ENCODE measurements at regions of chrX and their contacts with region 1.

Region 1: DNA sequence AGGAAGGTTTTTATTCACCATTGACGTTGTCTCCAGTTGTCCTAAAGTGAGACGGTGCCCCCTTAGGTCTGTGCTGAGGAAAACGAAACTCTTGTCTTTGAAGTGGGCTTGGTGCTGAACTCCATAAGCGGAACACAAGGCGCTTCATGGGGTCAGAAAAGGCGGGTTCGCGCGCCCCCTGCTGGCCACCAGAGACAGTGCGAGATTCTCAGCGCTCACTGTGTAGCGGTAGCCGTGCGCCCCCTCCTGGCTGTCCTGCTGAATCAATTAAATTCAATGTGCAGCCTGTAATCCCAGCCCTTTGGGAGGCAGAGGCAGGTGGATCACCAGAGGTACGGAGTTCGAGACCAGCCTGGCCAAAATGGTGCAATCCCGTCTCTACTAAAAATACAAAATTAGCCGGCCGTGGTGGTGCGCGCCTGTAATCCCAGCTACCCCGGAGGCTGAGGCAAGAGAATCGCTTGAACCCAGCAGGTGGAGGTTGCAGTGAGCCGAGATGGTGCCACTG is 64.1 kb downstream of the RLIM start:
- DNase-seq: peak; percentile 68
- H3K4me3 Mint-ChIP-seq: peak overlapping the region; percentile 39
- H3K27ac Mint-ChIP-seq: no peak overlapping the region
- H3K4me1 Mint-ChIP-seq: peaks cover 6% of the 10 kb centered on the region
- H3K27me3 Mint-ChIP-seq: no peaks in the 10 kb centered on the region

Region 2: GRCh38 chrX:73855546-73855945 is 694.8 kb before region 1 on chrX:
- intact Hi-C with region 1: loop called (anchors 5 kb)
- DNase-seq: peak; percentile 18
- H3K4me3 Mint-ChIP-seq: no peak overlapping the region
- H3K27ac Mint-ChIP-seq: no peak overlapping the region
- H3K4me1 Mint-ChIP-seq: no peaks in the 10 kb centered on the region
- H3K27me3 Mint-ChIP-seq: no peaks in the 10 kb centered on the region

Region 3: DNA sequence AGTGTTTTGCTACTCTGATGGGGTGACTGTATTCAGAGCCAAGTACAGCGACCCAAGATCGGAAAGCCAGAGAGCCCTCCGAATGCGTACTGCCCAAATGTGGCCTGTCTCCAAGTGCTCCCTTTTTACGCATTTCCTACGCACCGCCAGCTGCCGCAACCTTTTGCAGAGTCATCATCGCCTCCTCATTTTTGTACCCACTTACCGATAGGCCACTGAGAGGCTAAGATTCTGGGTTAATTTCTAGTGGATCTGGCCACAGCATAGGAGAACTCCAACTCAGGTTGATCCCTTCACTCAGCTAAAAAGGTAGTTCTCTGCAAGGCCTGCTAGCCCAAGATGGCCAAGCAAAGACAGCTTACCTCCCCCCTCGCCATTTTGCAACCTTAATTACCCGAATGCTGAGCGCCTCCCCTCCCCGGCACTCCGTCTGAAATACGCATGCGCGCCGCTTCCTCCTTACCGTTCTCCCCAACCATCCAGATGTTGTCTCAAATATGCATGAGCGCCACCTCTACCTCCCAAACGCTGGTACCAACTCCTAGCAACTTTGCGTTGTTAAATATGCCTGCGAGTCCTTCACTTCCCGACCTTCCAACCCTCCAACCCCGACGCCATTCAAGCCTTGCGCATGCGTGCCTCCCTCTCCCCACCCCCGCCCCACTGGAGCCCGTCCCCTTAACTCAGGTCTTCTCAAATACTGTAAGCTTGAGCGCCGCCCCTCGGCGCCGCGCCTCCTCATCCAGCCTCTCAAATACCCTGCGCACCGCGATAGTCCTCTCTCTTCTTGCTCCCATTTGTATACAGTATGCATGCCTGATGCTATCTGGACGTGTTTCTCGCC is 258.2 kb before region 1 on chrX:
- intact Hi-C with region 1: loop called (anchors 5 kb)
- DNase-seq: peak; percentile 68
- H3K4me3 Mint-ChIP-seq: peak overlapping the region; percentile 97
- H3K27ac Mint-ChIP-seq: peak overlapping the region; percentile 100
- H3K4me1 Mint-ChIP-seq: peaks cover 14% of the 10 kb centered on the region
- H3K27me3 Mint-ChIP-seq: no peaks in the 10 kb centered on the region

Region 4: DNA sequence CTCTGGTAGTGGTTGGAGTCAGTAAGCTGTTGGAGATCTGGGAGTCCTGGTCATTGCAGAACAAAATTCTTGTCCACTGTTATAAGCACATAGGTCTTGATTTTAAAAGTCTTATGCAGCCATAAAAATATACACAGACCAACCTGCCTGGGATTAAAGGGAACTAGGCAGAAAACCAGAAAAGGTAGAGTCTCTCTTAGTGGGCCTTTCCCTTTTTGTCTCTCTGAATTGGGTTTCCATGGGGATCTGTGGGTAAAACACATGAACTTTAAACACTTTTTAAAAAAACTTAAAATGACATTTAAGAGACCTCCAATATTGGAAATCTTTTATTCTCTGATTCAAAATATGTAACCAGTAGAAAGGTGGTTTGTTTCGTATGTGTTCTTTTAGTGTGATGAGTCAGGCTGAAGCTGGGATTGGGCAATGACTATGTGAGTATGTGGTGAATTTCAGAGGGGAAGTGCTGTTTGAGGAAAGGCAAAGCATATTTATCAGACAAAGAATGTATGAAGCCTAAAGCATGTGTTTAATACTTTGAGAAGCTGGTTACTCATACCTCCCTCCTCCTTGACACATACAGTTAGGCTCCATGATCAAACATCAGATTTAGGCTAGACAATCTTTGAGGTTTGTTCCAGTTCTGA is 99.4 kb before region 1 on chrX:
- intact Hi-C with region 1: loop called (anchors 2 kb)
- DNase-seq: no peak
- H3K4me3 Mint-ChIP-seq: no peak overlapping the region
- H3K27ac Mint-ChIP-seq: peak overlapping the region; percentile 80
- H3K4me1 Mint-ChIP-seq: peaks cover 18% of the 10 kb centered on the region
- H3K27me3 Mint-ChIP-seq: no peaks in the 10 kb centered on the region

Region 5: GRCh38 chrX:74579597-74580198 is 29.3 kb after region 1 on chrX:
- intact Hi-C with region 1: loop called (anchors 2 kb)
- DNase-seq: no peak
- H3K4me3 Mint-ChIP-seq: no peak overlapping the region
- H3K27ac Mint-ChIP-seq: peak overlapping the region; percentile 75
- H3K4me1 Mint-ChIP-seq: peaks cover 11% of the 10 kb centered on the region
- H3K27me3 Mint-ChIP-seq: no peaks in the 10 kb centered on the region

Measured in activated T-helper 2 cell treated with anti-CD3 and anti-CD28 coated beads, Interferon-gamma antibody, Interleukin-2, Interleukin-4, amounts not matched to agents 10 μg/mL and 5 μg/mL and 100 μg/mL, durations not matched to agents 14 hours and 24 hours and 36 hours (primary cell).